K562 (cell line): ENCODE measurements at regions of chr14 and their contacts with region 1.

Region 1: DNA sequence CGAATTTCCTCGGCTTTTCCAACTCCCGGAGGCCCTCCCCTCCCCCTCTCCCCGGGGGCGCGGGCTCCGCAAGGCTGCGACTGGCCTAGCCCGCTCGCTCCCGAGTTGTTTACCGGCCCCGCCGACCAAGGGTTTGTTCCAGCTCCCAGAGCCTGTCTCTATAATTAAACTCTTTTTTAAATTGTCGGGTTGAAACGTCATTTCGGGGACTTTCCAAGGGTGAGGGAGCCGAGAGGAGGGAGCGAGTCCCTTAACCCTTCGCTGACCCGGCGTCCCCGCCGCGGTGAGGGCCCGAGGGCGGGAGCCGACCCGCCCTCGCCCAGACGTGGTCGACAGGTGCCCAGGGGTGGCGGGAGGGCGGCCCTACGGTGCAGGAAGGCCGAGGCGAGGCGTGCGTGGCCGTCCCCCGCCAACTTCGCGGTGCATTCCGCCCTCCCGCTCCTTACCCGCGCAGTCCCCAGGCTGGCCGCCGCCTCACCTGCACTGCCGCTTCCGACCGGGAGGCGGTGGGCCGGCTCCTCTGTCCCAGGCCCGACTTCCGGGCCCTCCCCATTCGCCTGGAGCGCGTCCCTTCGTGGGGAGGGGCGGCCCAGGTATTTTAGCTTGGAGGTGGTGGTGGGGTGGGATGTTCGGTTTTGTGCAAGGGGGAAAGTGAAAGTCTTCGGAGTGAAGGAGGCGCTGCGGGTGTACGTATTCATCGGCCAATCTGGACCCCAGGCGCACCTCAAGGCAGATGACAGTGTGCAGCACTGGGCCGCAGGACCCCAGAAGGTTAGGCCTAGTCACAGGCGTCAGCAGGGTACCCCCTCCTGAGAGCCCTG is 2.9 kb upstream of the ZFP36L1 start:
- DNase-seq: peak; percentile 76 to 85 (median 78)
- ATAC-seq: peak; percentile 82
- H3K4me3 ChIP-seq: peak overlapping the region; percentile 65
- H3K27ac ChIP-seq: peak overlapping the region; percentile 100
- H3K4me1 ChIP-seq: peaks cover 21 to 33% of the 10 kb centered on the region in 2 experiments; a peak in 4 of 5 replicates
- H3K27me3 ChIP-seq: no peaks in the 10 kb centered on the region
- CTCF ChIP-seq: peak; percentile 57 to 67 (median 61); a peak in 5 of 6 replicates
- EP300 ChIP-seq: peak; percentile 2; the same call in 1 of the 2 replicates
- POLR2A ChIP-seq: peak; percentile 79
- RAD21 ChIP-seq: peak; percentile 18 to 34; a peak in 3 of 4 replicates

Region 2: DNA sequence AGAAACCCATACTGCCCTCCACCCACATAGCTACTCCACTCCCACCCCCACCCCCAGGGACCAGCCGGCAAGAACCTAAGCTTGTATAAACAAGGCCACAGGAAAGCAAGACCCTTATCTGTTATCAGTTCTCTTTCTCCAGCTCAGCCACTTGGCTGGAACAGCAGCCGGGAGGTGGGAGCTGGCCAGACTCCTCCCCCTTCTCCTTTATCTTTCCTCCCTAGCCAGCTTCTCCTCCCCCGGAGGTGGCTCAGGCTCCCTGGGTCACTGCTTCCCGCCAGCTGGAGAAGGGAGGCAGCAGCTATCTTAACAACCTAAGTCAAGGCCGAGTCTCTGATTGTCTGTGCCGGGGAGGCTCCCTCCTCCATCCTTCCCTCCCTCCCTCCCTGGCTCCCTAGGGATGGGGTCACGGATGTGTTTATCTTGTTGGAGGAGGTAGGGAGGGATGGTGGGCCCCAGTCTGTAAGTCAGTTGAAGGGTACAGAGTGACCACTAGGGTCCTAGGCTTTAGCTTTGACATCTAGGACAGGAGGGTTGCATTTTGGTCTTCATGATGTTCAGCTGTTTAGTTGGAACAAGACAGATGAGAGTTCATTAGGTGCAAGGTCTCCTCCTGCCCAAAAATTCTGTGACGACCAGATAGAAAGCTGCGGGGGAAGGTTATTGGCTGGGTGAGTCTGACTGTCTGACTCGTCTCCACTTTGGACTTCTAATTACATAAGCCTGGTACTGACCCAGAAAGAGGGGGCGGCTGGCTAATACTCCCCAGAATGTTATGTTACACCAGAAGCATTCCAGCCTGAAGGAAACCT is 32.6 kb before region 1 on chr14:
- CTCF ChIA-PET with region 1: no interaction called
- POLR2A ChIA-PET with region 1: interaction called, 3 read pairs
- in situ Hi-C with region 1: no loop called
- intact Hi-C with region 1: loop called (anchors 2 kb)
- DNase-seq: peak; percentile 93 to 95 (median 94)
- ATAC-seq: peak; percentile 88
- H3K4me3 ChIP-seq: no peak overlapping the region
- H3K27ac ChIP-seq: peak overlapping the region; percentile 28; the same call in 1 of the 3 replicates
- H3K4me1 ChIP-seq: peaks cover 28 to 55% of the 10 kb centered on the region in 2 experiments
- H3K27me3 ChIP-seq: no peaks in the 10 kb centered on the region
- CTCF ChIP-seq: no peak
- EP300 ChIP-seq: peak; percentile 85
- POLR2A ChIP-seq: no peak
- RAD21 ChIP-seq: peak in 1 of 2 experiments; percentile 26; a peak in 1 of 4 replicates